Activated CD4-positive, alpha-beta T cell treated with anti-CD3 and anti-CD28 coated beads for 36 hours (primary cell): ENCODE measurements at regions of chr4 and their contacts with region 1.

Region 1: GRCh38 chr4:81052119-81053068 is 21.9 kb downstream of the BMP3 start:
- DNase-seq: peak; percentile 64
- ATAC-seq: no peak
- H3K4me3 Mint-ChIP-seq: no peak overlapping the region
- H3K27ac Mint-ChIP-seq: no peak overlapping the region
- H3K4me1 Mint-ChIP-seq: no peaks in the 10 kb centered on the region
- H3K27me3 Mint-ChIP-seq: peaks cover 14% of the 10 kb centered on the region

Region 2: DNA sequence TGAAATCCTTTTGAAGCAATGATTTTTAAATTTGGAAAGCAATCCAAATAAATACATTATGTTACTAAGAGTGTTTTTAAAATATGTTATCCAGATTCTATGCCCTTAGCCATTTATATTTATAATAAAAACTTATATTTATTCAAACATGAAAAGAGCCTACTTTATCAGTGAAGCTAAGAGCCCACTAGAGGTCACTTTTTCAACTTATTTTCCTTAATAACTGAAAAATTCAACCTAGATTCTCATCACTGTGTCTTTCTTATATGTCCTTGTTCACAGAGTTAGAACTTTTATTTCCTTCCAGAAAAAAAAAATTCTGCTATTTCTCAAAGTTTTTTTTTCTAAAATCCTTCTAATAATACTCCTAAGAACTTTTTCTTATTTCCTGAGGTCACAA is 831.2 kb before region 1 on chr4:
- CTCF ChIA-PET with region 1: no interaction called
- POLR2A ChIA-PET with region 1: no interaction called
- intact Hi-C with region 1: loop called in 1 of 2 experiments (anchors 5 kb)
- DNase-seq: no peak
- ATAC-seq: no peak
- H3K4me3 Mint-ChIP-seq: no peak overlapping the region
- H3K27ac Mint-ChIP-seq: no peak overlapping the region
- H3K4me1 Mint-ChIP-seq: no peaks in the 10 kb centered on the region
- H3K27me3 Mint-ChIP-seq: peaks cover 23% of the 10 kb centered on the region

Region 3: DNA sequence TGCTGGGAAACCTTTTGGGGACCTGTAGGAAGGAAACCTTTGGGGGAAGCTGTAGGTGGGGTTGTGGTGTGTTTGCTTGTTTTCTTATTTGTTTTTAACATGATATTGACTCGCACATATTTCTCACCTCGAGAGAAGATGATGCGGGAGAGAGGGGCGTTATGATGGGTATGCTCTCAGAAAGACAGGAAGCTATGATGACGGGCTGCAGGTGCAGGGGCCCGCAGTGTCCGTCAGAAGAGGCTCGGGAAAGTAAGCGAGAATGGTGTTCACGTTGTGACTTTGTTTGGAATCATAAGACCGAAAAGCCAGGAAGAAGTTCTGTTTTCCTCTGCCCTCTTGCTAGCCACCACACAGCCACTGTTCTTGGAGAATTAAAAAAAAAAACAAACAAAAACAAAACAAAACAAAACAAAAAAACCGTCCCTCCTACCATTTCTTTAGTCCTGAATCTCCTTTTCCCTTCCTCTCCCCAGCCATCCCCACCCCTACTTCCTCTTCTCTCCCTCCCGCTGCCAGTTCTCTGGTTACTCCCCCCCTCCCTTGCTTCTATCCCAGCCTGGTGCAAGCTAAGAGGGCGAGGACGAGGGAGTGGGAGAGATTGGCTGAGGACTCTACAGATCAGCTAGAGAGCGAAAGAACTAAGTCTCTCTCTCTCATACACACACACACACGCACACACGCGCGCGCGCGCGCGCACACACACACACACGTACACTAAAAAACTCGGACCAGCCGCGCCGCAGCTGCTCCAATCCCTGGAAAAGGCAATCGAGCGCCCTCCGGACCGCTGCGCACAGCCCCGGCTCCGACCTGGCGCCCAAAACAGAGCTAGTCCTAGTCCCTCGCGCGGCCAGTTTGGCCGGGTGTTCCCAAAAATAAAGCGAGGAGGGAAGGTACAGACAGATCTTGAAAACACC is 22.1 kb before region 1 on chr4 and contains the start of gene BMP3:
- CTCF ChIA-PET with region 1: no interaction called
- POLR2A ChIA-PET with region 1: no interaction called
- intact Hi-C with region 1: no loop called
- DNase-seq: peak; percentile 18
- ATAC-seq: no peak
- H3K4me3 Mint-ChIP-seq: peak within 1 kb of the TSS; percentile 56
- H3K27ac Mint-ChIP-seq: no peak within 1 kb of the TSS
- H3K4me1 Mint-ChIP-seq: peaks cover 12% of the 10 kb centered on the region
- H3K27me3 Mint-ChIP-seq: peaks cover 65% of the 10 kb centered on the region
- total RNA-seq, gene BMP3: not detected